ENCODE measurements at regions of chr9 and their contacts with region 1.

Region 1: GRCh38 chr9:10268531-10269485 is 344.0 kb downstream of the PTPRD start:
- DNase-seq: peak; percentile 28
- H3K4me3 Mint-ChIP-seq: no peak overlapping the region
- H3K27ac Mint-ChIP-seq: no peak overlapping the region
- H3K4me1 Mint-ChIP-seq: no peaks in the 10 kb centered on the region
- H3K27me3 Mint-ChIP-seq: no peaks in the 10 kb centered on the region
- CTCF ChIP-seq: no peak

Region 2: DNA sequence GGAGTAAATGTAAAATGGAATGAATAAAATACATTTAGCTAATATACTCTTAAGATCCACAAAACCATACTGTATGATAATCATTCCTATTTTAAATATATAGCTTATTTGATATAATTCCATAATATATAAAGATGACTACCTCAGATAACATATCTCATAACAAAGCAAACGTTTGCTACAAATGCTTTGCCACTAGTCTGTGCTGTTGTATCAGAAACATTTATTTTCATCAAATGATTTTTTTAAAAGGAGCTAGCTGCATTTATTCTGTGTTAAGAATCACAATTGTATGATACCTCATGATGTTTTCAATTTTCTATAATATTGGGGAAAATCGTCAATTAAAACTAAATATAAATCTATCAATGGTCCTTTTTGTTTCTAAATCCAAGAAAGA is 223.2 kb before region 1 on chr9:
- CTCF ChIA-PET with region 1: no interaction called
- intact Hi-C with region 1: loop called (anchors 5 kb)
- DNase-seq: no peak
- H3K4me3 Mint-ChIP-seq: no peak overlapping the region
- H3K27ac Mint-ChIP-seq: no peak overlapping the region
- H3K4me1 Mint-ChIP-seq: no peaks in the 10 kb centered on the region
- H3K27me3 Mint-ChIP-seq: no peaks in the 10 kb centered on the region
- CTCF ChIP-seq: no peak

Region 3: DNA sequence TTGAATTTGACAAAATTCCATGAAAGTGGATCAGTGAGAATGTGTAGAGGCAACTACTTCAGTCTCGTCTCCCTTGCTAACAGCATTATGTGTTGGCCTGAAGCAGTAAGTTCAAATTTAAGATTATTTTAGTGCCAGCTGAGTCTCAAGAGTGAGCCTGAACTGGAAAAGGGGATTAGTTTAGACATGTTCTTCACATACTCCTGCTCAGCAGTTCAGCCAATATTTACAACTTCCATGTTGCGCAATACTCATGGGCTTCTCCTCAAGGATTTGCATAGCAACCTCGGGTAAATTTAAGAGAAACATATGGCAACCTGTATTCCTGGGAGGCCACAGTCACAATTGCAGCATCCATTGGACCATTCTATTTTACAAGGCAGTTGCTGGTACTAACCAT is 209.8 kb before region 1 on chr9:
- CTCF ChIA-PET with region 1: interaction called, 3 read pairs
- intact Hi-C with region 1: loop called (anchors 2 kb)
- DNase-seq: no peak
- H3K4me3 Mint-ChIP-seq: no peak overlapping the region
- H3K27ac Mint-ChIP-seq: no peak overlapping the region
- H3K4me1 Mint-ChIP-seq: no peaks in the 10 kb centered on the region
- H3K27me3 Mint-ChIP-seq: no peaks in the 10 kb centered on the region
- CTCF ChIP-seq: no peak

Region 4: DNA sequence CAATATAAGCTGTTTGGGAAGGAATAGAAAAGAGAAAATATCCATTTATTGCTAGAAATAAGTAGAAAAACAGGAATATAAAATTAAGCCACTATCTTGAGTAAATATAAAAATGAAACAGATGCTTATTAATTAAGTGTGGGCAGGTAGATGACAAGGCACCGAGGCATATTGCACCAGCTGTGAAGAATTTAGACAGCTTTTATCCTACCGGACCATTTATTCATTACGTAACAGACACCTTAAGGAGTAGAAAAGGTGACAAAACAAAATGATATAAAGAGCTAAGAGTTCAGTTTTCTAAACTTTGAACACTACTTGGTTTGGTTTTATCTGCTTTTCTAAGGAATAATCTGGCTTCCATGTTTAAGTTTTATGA is 60.1 kb before region 1 on chr9:
- CTCF ChIA-PET with region 1: no interaction called
- intact Hi-C with region 1: no loop called
- DNase-seq: no peak
- H3K4me3 Mint-ChIP-seq: peak overlapping the region; percentile 56
- H3K27ac Mint-ChIP-seq: no peak overlapping the region
- H3K4me1 Mint-ChIP-seq: no peaks in the 10 kb centered on the region
- H3K27me3 Mint-ChIP-seq: no peaks in the 10 kb centered on the region
- CTCF ChIP-seq: no peak

Region 5: DNA sequence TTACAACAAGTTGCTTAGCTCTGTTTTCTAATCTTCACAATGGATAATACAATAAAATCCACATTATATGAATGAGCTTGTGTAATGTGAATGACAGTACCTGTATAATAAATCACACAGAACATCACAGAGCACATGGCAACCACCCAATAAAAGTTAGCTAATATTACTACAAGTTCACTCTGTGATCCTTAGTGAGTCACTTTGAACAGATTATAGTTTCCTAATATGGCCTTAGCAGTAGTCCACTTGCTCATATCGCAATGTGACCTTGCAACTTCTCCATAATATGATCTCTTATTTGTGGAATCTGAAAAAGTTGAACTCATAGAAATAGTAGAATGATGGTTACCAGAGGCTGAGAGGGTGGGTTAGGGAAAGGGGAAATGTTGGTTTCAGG is 17.3 kb before region 1 on chr9:
- CTCF ChIA-PET with region 1: interaction called, 10 read pairs
- intact Hi-C with region 1: no loop called
- DNase-seq: no peak
- H3K4me3 Mint-ChIP-seq: no peak overlapping the region
- H3K27ac Mint-ChIP-seq: no peak overlapping the region
- H3K4me1 Mint-ChIP-seq: no peaks in the 10 kb centered on the region
- H3K27me3 Mint-ChIP-seq: no peaks in the 10 kb centered on the region
- CTCF ChIP-seq: no peak